ENCODE measurements at regions of chr11 and their contacts with region 1.

Region 1: GRCh38 chr11:118198370-118198769 is 21.9 kb upstream of the SCN2B start:
- DNase-seq: peak; percentile 93
- ATAC-seq: peak; percentile 14
- H3K4me3 Mint-ChIP-seq: no peak overlapping the region
- H3K27ac Mint-ChIP-seq: no peak overlapping the region
- H3K4me1 Mint-ChIP-seq: peaks cover 40% of the 10 kb centered on the region
- H3K27me3 Mint-ChIP-seq: no peaks in the 10 kb centered on the region
- CTCF ChIP-seq: peak; percentile 92

Region 2: DNA sequence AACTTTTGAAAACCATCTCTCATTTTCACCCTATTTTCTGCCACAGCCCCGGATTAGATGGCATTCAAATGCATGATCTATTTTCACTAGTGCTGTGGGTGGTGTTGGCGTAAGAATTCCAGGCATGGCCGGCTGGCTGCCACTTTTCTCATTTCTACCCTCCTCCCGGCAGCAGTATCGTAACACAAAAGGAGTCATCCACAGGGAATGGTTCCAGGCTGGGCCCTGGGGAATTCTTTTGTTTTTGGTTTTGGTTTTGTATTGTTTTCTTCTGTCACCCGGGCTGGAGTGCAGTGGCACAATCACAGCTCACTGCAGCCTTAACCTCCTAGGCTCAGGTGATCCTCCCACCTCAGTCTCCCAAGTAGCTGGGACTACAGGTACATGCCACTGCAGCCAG is 12.6 kb after region 1 on chr11:
- CTCF ChIA-PET with region 1: interaction called, 100 read pairs
- POLR2A ChIA-PET with region 1: interaction called, 326 read pairs
- intact Hi-C with region 1: no loop called
- DNase-seq: no peak
- ATAC-seq: no peak
- H3K4me3 Mint-ChIP-seq: no peak overlapping the region
- H3K27ac Mint-ChIP-seq: peak overlapping the region; percentile 100
- H3K4me1 Mint-ChIP-seq: peaks cover 85% of the 10 kb centered on the region
- H3K27me3 Mint-ChIP-seq: no peaks in the 10 kb centered on the region
- CTCF ChIP-seq: no peak

Region 3: DNA sequence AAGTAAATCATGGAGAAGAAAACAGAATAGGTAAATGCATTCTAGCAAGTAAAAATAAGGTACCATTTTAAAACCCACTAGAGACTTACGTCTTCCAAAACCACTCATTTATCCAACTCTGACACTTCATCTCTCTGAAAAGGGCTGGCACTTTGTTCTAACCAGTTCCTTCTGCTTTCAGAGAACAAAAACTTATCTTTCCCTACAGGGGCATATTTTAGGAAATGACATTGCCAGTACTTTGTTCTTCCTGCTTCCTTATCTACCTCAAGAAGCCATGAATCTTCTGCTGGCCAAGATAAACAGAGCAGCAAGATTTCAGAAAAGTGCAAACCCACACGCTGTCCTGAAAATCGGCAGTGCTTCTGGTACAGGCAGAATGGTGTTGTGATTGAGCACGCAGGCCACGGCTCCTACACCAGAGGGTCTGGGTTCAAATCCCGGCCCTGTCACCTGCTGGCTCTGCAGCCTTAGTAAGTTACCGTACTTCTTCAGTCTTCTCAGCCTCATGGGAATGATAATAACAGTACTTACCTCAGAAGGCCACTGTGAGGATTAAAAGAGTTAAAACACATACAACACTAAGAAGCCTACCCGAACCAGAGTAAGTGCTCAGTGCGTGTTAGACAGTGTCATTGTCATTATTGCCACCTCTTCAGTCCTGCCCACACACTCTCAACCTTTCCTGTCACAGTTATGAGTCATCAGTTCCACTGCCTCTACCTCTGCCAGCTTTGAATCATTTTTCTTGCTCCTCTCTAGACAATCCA is 42.8 kb after region 1 on chr11:
- CTCF ChIA-PET with region 1: interaction called, 24 read pairs
- POLR2A ChIA-PET with region 1: interaction called, 40 read pairs
- intact Hi-C with region 1: loop called (anchors 5 kb)
- DNase-seq: peak; percentile 85
- ATAC-seq: peak; percentile 82
- H3K4me3 Mint-ChIP-seq: peak overlapping the region; percentile 86
- H3K27ac Mint-ChIP-seq: peak overlapping the region; percentile 97
- H3K4me1 Mint-ChIP-seq: peaks cover 78% of the 10 kb centered on the region
- H3K27me3 Mint-ChIP-seq: no peaks in the 10 kb centered on the region
- CTCF ChIP-seq: no peak

Region 4: DNA sequence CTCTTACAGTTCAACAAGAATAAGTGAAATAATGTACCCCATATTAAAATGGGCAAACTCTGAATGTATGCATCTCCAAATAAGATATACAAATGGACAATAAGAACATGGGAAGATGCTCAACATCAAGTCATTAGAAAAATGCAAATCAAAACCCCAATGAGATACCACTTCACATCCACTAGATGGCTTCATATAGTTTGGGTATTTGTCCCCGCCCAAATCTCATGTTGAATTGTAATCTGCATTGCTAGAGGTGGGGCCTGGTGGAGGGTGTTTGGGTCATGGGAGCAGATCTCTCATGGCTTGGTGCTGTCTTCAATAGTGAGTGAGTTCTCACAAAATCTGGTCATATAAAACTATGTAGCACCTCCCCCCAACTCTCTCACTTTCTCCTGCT is 60.0 kb after region 1 on chr11:
- CTCF ChIA-PET with region 1: interaction called, 24 read pairs
- POLR2A ChIA-PET with region 1: interaction called, 3 read pairs
- intact Hi-C with region 1: no loop called
- DNase-seq: peak; percentile 50
- ATAC-seq: peak; percentile 76
- H3K4me3 Mint-ChIP-seq: no peak overlapping the region
- H3K27ac Mint-ChIP-seq: no peak overlapping the region
- H3K4me1 Mint-ChIP-seq: peaks cover 62% of the 10 kb centered on the region
- H3K27me3 Mint-ChIP-seq: no peaks in the 10 kb centered on the region
- CTCF ChIP-seq: peak; percentile 58

Region 5: GRCh38 chr11:118290923-118291322 is 92.6 kb after region 1 on chr11:
- CTCF ChIA-PET with region 1: interaction called, 53 read pairs
- POLR2A ChIA-PET with region 1: interaction called, 4 read pairs
- intact Hi-C with region 1: loop called (anchors 5 kb)
- DNase-seq: peak; percentile 74
- ATAC-seq: peak; percentile 71
- H3K4me3 Mint-ChIP-seq: no peak overlapping the region
- H3K27ac Mint-ChIP-seq: no peak overlapping the region
- H3K4me1 Mint-ChIP-seq: peaks cover 32% of the 10 kb centered on the region
- H3K27me3 Mint-ChIP-seq: no peaks in the 10 kb centered on the region
- CTCF ChIP-seq: peak; percentile 48

Region 6: GRCh38 chr11:118338637-118339061 is 140.3 kb after region 1 on chr11:
- CTCF ChIA-PET with region 1: interaction called, 5 read pairs
- POLR2A ChIA-PET with region 1: interaction called, 6 read pairs
- intact Hi-C with region 1: loop called (anchors 5 kb)
- DNase-seq: peak; percentile 97
- ATAC-seq: peak; percentile 63
- H3K4me3 Mint-ChIP-seq: peak overlapping the region; percentile 81
- H3K27ac Mint-ChIP-seq: peak overlapping the region; percentile 96
- H3K4me1 Mint-ChIP-seq: peaks cover 39% of the 10 kb centered on the region
- H3K27me3 Mint-ChIP-seq: no peaks in the 10 kb centered on the region
- CTCF ChIP-seq: no peak

Measured in activated CD8-positive, alpha-beta T cell treated with anti-CD3 and anti-CD28 coated beads for 36 hours (primary cell).